PC-9 (cell line): ENCODE measurements at regions of chr11 and their contacts with region 1.

Region 1: GRCh38 chr11:61891331-61892084 is at the start of gene FADS3:
- DNase-seq: peak; percentile 75 to 96
- H3K4me3 ChIP-seq: peak within 1 kb of the TSS; percentile 94
- H3K27ac ChIP-seq: no peak within 1 kb of the TSS
- H3K4me1 ChIP-seq: peaks cover 12% of the 10 kb centered on the region
- H3K27me3 ChIP-seq: no peaks in the 10 kb centered on the region
- CTCF ChIP-seq: no peak
- total RNA-seq, gene FADS3: 74.0 and 75.5 TPM in 2 replicates

Region 2: GRCh38 chr11:60831143-60831500 is 1060.4 kb before region 1 on chr11:
- CTCF ChIA-PET with region 1: no interaction called
- POLR2A ChIA-PET with region 1: no interaction called
- intact Hi-C with region 1: no loop called
- DNase-seq: peak; percentile 74 to 88
- H3K4me3 ChIP-seq: no peak overlapping the region
- H3K27ac ChIP-seq: no peak overlapping the region
- H3K4me1 ChIP-seq: 0 out of 2 replicates have a peak, but pooled peaks cover 3% of the 10 kb centered on the region
- H3K27me3 ChIP-seq: peaks cover 17% of the 10 kb centered on the region; the same call in 1 of the 2 replicates
- CTCF ChIP-seq: peak; percentile 99

Region 3: GRCh38 chr11:61904539-61905048 is 13.1 kb after region 1 on chr11:
- CTCF ChIA-PET with region 1: no interaction called
- POLR2A ChIA-PET with region 1: interaction called, 10 read pairs
- intact Hi-C with region 1: no loop called
- DNase-seq: no peak
- H3K4me3 ChIP-seq: no peak overlapping the region
- H3K27ac ChIP-seq: no peak overlapping the region
- H3K4me1 ChIP-seq: no peaks in the 10 kb centered on the region
- H3K27me3 ChIP-seq: no peaks in the 10 kb centered on the region
- CTCF ChIP-seq: no peak

Region 4: GRCh38 chr11:62013591-62014476 is 122.3 kb after region 1 on chr11:
- CTCF ChIA-PET with region 1: no interaction called
- POLR2A ChIA-PET with region 1: no interaction called
- intact Hi-C with region 1: no loop called
- DNase-seq: peak; percentile 80 to 83
- H3K4me3 ChIP-seq: peak overlapping the region; percentile 33; the same call in 1 of the 2 replicates
- H3K27ac ChIP-seq: peak overlapping the region; percentile 72
- H3K4me1 ChIP-seq: peaks cover 46% of the 10 kb centered on the region
- H3K27me3 ChIP-seq: no peaks in the 10 kb centered on the region
- CTCF ChIP-seq: no peak

Region 5: DNA sequence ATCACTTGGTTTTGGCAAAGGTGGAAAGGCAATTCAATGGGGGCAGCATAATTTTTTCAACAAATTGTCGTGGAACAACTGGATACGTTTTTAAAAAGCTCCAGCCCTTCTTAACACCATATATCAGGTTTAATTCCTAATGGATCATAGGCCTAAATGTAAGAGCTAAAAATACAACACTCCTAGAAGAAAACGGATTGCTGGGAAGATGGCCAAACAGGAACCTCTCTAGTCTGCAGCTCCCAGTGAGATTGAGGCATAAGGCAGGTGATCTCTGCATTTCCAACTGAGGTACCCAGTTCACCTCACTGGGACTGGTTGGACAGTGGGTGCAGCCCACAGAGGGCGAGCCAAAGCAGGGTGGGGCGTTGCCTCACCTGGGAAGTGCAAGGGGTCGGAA is 266.1 kb after region 1 on chr11:
- CTCF ChIA-PET with region 1: no interaction called
- POLR2A ChIA-PET with region 1: no interaction called
- intact Hi-C with region 1: no loop called
- DNase-seq: no peak
- H3K4me3 ChIP-seq: no peak overlapping the region
- H3K27ac ChIP-seq: no peak overlapping the region
- H3K4me1 ChIP-seq: no peaks in the 10 kb centered on the region
- H3K27me3 ChIP-seq: peaks cover 44% of the 10 kb centered on the region
- CTCF ChIP-seq: no peak